ENCODE measurements at regions of chr4 and their contacts with region 1.

Region 1: GRCh38 chr4:53490965-53491622 is 100.2 kb downstream of the LNX1 start:
- DNase-seq: peak in 1 of 5 donors; percentile 25
- ATAC-seq: peak in 2 of 4 donors; percentile 48 to 73
- H3K4me3 ChIP-seq: no peak overlapping the region
- H3K27ac ChIP-seq: peak overlapping the region in 2 of 12 donors; percentile 4 to 47
- H3K4me1 ChIP-seq: peaks cover 0 to 11% (median 2%) of the 10 kb centered on the region in 12 donors
- H3K27me3 ChIP-seq: no peaks in the 10 kb centered on the region
- CTCF ChIP-seq: peak; percentile 44 to 80 (median 65)
- POLR2A ChIP-seq: no peak

Region 2: GRCh38 chr4:53653484-53654053 is 162.5 kb after region 1 on chr4:
- intact Hi-C with region 1: loop called in 4 of 10 experiments (anchors 5 to 10 kb)
- DNase-seq: no peak
- ATAC-seq: peak in 1 of 4 donors; percentile 25
- H3K4me3 ChIP-seq: no peak overlapping the region
- H3K27ac ChIP-seq: peak overlapping the region in 7 of 12 donors; percentile 5 to 77 (median 32)
- H3K4me1 ChIP-seq: peaks cover 0 to 38% (median 17%) of the 10 kb centered on the region in 12 donors
- H3K27me3 ChIP-seq: no peaks in the 10 kb centered on the region
- CTCF ChIP-seq: peak in 3 of 12 donors; percentile 6 to 34 (median 17)
- POLR2A ChIP-seq: no peak

Region 3: DNA sequence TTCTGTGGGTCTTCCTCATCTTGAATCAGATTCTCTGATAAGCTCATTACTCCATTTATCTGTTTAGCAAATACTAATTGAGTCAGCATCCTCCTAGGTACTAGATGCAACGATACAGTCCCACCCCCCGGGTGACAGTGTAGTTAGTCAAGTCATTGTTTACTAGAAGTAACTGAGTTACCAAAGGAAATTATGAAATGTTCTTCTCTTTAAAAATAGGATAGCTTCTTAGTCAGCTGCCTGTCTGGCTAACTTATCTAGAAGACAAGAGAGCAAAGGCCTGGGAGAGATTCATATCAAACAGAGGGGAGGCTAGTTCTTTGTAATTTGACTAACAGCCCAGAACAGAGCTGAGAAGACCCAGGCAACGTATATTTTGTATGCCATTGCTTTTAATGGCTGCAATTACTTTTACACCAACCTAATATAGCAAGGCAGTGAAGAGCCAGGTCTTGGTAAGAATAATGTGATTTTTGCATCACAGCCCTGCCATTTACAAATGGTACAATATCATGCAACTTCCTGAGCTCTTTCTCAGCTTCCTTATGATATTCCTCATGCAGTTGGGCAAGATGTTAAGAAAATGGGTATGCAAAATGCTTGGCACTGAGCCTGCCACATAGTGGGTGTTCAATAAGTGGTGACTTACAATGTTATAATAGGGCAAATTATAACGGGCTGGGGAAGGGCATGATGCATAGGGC is 423.4 kb after region 1 on chr4:
- intact Hi-C with region 1: loop called in 3 of 10 experiments (anchors 10 kb)
- DNase-seq: no peak
- ATAC-seq: peak in 2 of 4 donors; percentile 34 to 68
- H3K4me3 ChIP-seq: no peak overlapping the region
- H3K27ac ChIP-seq: peak overlapping the region in 1 of 12 donors; percentile 16
- H3K4me1 ChIP-seq: peaks cover 0 to 18% (median 0%) of the 10 kb centered on the region in 12 donors
- H3K27me3 ChIP-seq: no peaks in the 10 kb centered on the region
- CTCF ChIP-seq: no peak
- POLR2A ChIP-seq: no peak

Region 4: GRCh38 chr4:54228056-54228527 is 737.0 kb after region 1 on chr4:
- intact Hi-C with region 1: loop called in 5 of 10 experiments (anchors 5 to 10 kb)
- DNase-seq: peak; percentile 74 to 86 (median 77)
- ATAC-seq: peak; percentile 63 to 74 (median 70)
- H3K4me3 ChIP-seq: peak overlapping the region in 11 of 12 donors; percentile 26 to 80 (median 53)
- H3K27ac ChIP-seq: peak overlapping the region in 10 of 12 donors; percentile 1 to 89 (median 68)
- H3K4me1 ChIP-seq: peaks cover 6 to 66% (median 53%) of the 10 kb centered on the region in 12 donors
- H3K27me3 ChIP-seq: peaks cover 48 to 98% (median 92%) of the 10 kb centered on the region in 9 donors
- CTCF ChIP-seq: peak; percentile 50 to 81 (median 74)
- POLR2A ChIP-seq: no peak

Measured in heart left ventricle (tissue), 16 donors.